Activated B cell treated with CpG ODN at 0.5 μM for 24 hours (primary cell): ENCODE measurements at regions of chr4 and their contacts with region 1.

Region 1: GRCh38 chr4:176054942-176055341 is 10.7 kb upstream of the WDR17 start:
- DNase-seq: no peak
- ATAC-seq: no peak
- H3K4me3 Mint-ChIP-seq: no peak overlapping the region
- H3K27ac Mint-ChIP-seq: no peak overlapping the region
- H3K4me1 Mint-ChIP-seq: peaks cover 10% of the 10 kb centered on the region
- H3K27me3 Mint-ChIP-seq: no peaks in the 10 kb centered on the region
- CTCF ChIP-seq: no peak

Region 2: GRCh38 chr4:175947117-175947722 is 107.7 kb before region 1 on chr4:
- CTCF ChIA-PET with region 1: interaction called, 3 read pairs
- POLR2A ChIA-PET with region 1: no interaction called
- intact Hi-C with region 1: loop called (anchors 2 kb)
- DNase-seq: no peak
- ATAC-seq: no peak
- H3K4me3 Mint-ChIP-seq: no peak overlapping the region
- H3K27ac Mint-ChIP-seq: no peak overlapping the region
- H3K4me1 Mint-ChIP-seq: peaks cover 6% of the 10 kb centered on the region
- H3K27me3 Mint-ChIP-seq: no peaks in the 10 kb centered on the region
- CTCF ChIP-seq: peak; percentile 18

Region 3: GRCh38 chr4:175953960-175954521 is 100.9 kb before region 1 on chr4:
- CTCF ChIA-PET with region 1: interaction called, 7 read pairs
- POLR2A ChIA-PET with region 1: no interaction called
- intact Hi-C with region 1: loop called (anchors 2 kb)
- DNase-seq: no peak
- ATAC-seq: peak; percentile 75
- H3K4me3 Mint-ChIP-seq: no peak overlapping the region
- H3K27ac Mint-ChIP-seq: no peak overlapping the region
- H3K4me1 Mint-ChIP-seq: peaks cover 9% of the 10 kb centered on the region
- H3K27me3 Mint-ChIP-seq: peaks cover 1% of the 10 kb centered on the region
- CTCF ChIP-seq: no peak

Region 4: DNA sequence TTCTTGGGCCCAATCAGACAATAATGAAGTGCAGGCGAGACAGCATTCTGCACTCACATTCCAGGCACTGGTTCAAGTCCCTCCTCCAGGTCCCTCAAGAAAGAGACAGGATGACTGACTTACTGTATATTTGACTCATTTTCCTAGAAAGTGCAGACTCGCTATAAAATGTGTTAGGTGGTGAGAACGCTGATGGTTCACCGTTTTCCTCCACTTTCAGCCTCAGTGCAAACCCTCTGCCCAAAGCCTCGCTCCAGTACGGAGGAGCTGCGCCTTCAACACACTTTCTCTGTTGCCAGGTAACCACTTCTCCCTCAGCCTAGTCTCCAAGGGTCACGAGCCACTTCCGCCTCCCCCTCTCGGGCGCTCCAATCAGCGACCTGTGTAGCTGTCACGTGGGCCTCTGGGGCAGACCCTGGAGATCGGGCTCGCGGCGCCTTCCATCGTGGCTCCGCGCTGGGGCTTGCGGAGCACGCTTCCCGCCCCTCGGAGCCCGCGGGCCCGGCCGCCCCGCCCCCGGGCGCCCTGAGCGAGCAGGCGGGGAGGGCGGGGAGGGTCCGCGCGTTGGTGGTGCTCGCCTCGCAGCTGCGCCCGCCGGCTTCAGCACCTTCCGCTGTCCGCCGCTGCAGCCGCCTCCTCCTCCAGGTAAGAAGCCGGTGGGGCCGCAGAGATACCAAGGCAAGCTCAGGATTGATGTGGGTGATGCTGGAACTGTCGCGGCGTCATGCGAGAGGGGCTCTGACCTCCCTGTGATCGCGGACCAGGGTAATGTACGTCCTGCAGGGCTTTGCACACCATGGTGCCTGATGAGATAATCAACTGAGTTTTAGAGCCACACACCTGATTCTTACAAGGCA is 10.7 kb after region 1 on chr4 and contains the start of gene WDR17:
- CTCF ChIA-PET with region 1: no interaction called
- POLR2A ChIA-PET with region 1: interaction called, 3 read pairs
- intact Hi-C with region 1: loop called (anchors 1 kb)
- DNase-seq: peak; percentile 79
- ATAC-seq: peak; percentile 97
- H3K4me3 Mint-ChIP-seq: peak within 1 kb of the TSS; percentile 90
- H3K27ac Mint-ChIP-seq: peak within 1 kb of the TSS; percentile 73
- H3K4me1 Mint-ChIP-seq: peaks cover 11% of the 10 kb centered on the region
- H3K27me3 Mint-ChIP-seq: peaks cover 3% of the 10 kb centered on the region
- CTCF ChIP-seq: no peak
- total RNA-seq, gene WDR17: 5.7 and 6.2 TPM in 2 replicates

Region 5: DNA sequence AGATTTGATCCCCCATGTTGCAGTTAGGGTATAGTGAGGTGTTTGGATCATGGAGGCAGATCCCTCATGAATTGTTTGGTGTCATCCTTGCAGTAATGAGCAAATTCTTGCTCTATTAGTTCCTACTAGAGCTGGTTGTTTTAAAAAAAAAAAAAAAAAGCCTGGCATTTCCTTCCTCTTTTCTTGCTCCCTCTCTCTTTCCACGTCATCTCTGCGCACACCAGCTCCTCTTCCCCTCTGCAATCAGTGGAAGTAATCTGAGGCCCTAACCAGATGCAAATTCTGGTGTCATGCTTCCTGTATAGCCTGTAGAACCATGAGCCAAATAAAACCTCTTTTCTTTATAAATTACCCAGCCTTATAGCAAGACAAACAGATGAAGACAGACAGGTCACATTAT is 35.2 kb after region 1 on chr4:
- CTCF ChIA-PET with region 1: no interaction called
- POLR2A ChIA-PET with region 1: no interaction called
- intact Hi-C with region 1: loop called (anchors 1 kb)
- DNase-seq: no peak
- ATAC-seq: peak; percentile 95
- H3K4me3 Mint-ChIP-seq: peak overlapping the region; percentile 9
- H3K27ac Mint-ChIP-seq: peak overlapping the region; percentile 33
- H3K4me1 Mint-ChIP-seq: peaks cover 20% of the 10 kb centered on the region
- H3K27me3 Mint-ChIP-seq: no peaks in the 10 kb centered on the region
- CTCF ChIP-seq: no peak